Endothelial cell of umbilical vein (primary cell): ENCODE measurements at regions of chr11 and their contacts with region 1.

Region 1: GRCh38 chr11:78564490-78565467 is 9.9 kb downstream of the NARS2 start:
- DNase-seq: peak; percentile 83
- H3K4me3 ChIP-seq: no peak overlapping the region
- H3K27ac ChIP-seq: no peak overlapping the region
- H3K4me1 ChIP-seq: peaks cover 45% of the 10 kb centered on the region
- H3K27me3 ChIP-seq: no peaks in the 10 kb centered on the region
- CTCF ChIP-seq: peak; percentile 37 to 40
- POLR2A ChIP-seq: no peak

Region 2: GRCh38 chr11:77820563-77821348 is 744.0 kb before region 1 on chr11 and contains the starts of genes AAMDC and RSF1:
- CTCF ChIA-PET with region 1: interaction called, 3 read pairs
- POLR2A ChIA-PET with region 1: no interaction called
- dilution Hi-C with region 1: no loop called
- intact Hi-C with region 1: loop called (anchors 2 kb)
- DNase-seq: peak; percentile 99
- H3K4me3 ChIP-seq: peak within 1 kb of the TSS; percentile 88 to 96 (median 91)
- H3K27ac ChIP-seq: peak within 1 kb of the TSS; percentile 53
- H3K4me1 ChIP-seq: peaks cover 13% of the 10 kb centered on the region
- H3K27me3 ChIP-seq: no peaks in the 10 kb centered on the region
- CTCF ChIP-seq: peak; percentile 61 to 93
- POLR2A ChIP-seq: peak; percentile 79
- total RNA-seq, gene AAMDC: 51.0 and 57.1 TPM in 2 replicates
- total RNA-seq, gene RSF1: 55.1 and 58.6 TPM in 2 replicates

Region 3: DNA sequence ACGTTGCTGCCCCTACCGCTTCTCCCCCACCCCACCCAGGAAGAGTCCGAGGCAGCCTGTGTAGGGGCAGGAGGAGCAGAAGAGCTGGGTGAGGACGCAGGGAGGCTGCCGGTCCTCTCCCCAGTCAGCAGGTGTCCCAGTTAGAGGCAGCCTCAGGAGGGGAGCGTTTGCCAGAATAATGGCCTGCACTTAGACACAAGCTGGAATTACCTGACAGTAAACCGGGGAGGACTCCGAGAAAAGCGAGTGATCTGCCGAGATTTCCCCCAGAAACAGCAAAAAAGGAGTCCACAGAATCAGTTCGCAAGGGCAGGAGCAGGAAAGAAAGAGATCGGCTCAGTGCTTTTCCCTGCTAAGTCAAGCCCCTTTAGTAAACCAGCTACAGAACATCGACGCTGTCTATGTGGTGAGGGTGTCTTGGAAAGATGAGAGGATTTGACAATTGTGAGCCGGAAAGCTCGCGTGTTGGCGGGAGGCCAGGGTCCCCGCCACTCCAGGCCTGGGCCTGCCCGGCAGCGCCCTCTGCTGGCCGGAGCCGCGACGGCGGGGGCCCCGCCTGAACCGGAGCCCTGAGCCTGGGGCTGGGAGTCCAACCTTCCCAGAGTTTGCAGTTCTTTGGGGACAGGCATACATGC is 518.8 kb before region 1 on chr11:
- CTCF ChIA-PET with region 1: interaction called, 29 read pairs
- POLR2A ChIA-PET with region 1: no interaction called
- dilution Hi-C with region 1: no loop called
- intact Hi-C with region 1: loop called (anchors 2 kb)
- DNase-seq: peak; percentile 62
- H3K4me3 ChIP-seq: peak overlapping the region in 2 of 3 experiments; percentile 23 to 72
- H3K27ac ChIP-seq: no peak overlapping the region
- H3K4me1 ChIP-seq: peaks cover 8% of the 10 kb centered on the region
- H3K27me3 ChIP-seq: no peaks in the 10 kb centered on the region
- CTCF ChIP-seq: peak; percentile 97 to 99
- POLR2A ChIP-seq: no peak

Region 4: GRCh38 chr11:78149646-78150045 is 415.1 kb before region 1 on chr11:
- CTCF ChIA-PET with region 1: interaction called, 36 read pairs
- POLR2A ChIA-PET with region 1: no interaction called
- dilution Hi-C with region 1: no loop called
- intact Hi-C with region 1: no loop called
- DNase-seq: peak; percentile 79
- H3K4me3 ChIP-seq: no peak overlapping the region
- H3K27ac ChIP-seq: no peak overlapping the region
- H3K4me1 ChIP-seq: no peaks in the 10 kb centered on the region
- H3K27me3 ChIP-seq: no peaks in the 10 kb centered on the region
- CTCF ChIP-seq: peak in 1 of 2 donors; percentile 24
- POLR2A ChIP-seq: no peak

Region 5: GRCh38 chr11:78228467-78228866 is 336.3 kb before region 1 on chr11:
- CTCF ChIA-PET with region 1: interaction called, 254 read pairs
- POLR2A ChIA-PET with region 1: interaction called, 3 read pairs
- dilution Hi-C with region 1: no loop called
- intact Hi-C with region 1: loop called (anchors 1 kb)
- DNase-seq: peak; percentile 82
- H3K4me3 ChIP-seq: no peak overlapping the region
- H3K27ac ChIP-seq: no peak overlapping the region
- H3K4me1 ChIP-seq: peaks cover 4% of the 10 kb centered on the region
- H3K27me3 ChIP-seq: no peaks in the 10 kb centered on the region
- CTCF ChIP-seq: peak; percentile 38 to 59
- POLR2A ChIP-seq: no peak

Region 6: GRCh38 chr11:78318321-78319114 is 246.3 kb before region 1 on chr11:
- CTCF ChIA-PET with region 1: interaction called, 12 read pairs
- POLR2A ChIA-PET with region 1: no interaction called
- dilution Hi-C with region 1: no loop called
- intact Hi-C with region 1: no loop called
- DNase-seq: peak; percentile 80
- H3K4me3 ChIP-seq: no peak overlapping the region
- H3K27ac ChIP-seq: no peak overlapping the region
- H3K4me1 ChIP-seq: peaks cover 21% of the 10 kb centered on the region
- H3K27me3 ChIP-seq: no peaks in the 10 kb centered on the region
- CTCF ChIP-seq: no peak
- POLR2A ChIP-seq: peak; percentile 25

Region 7: GRCh38 chr11:78432058-78432515 is 132.7 kb before region 1 on chr11:
- CTCF ChIA-PET with region 1: interaction called, 20 read pairs
- POLR2A ChIA-PET with region 1: no interaction called
- dilution Hi-C with region 1: no loop called
- intact Hi-C with region 1: no loop called
- DNase-seq: peak; percentile 40
- H3K4me3 ChIP-seq: no peak overlapping the region
- H3K27ac ChIP-seq: no peak overlapping the region
- H3K4me1 ChIP-seq: no peaks in the 10 kb centered on the region
- H3K27me3 ChIP-seq: no peaks in the 10 kb centered on the region
- CTCF ChIP-seq: peak; percentile 40 to 67
- POLR2A ChIP-seq: no peak

Region 8: DNA sequence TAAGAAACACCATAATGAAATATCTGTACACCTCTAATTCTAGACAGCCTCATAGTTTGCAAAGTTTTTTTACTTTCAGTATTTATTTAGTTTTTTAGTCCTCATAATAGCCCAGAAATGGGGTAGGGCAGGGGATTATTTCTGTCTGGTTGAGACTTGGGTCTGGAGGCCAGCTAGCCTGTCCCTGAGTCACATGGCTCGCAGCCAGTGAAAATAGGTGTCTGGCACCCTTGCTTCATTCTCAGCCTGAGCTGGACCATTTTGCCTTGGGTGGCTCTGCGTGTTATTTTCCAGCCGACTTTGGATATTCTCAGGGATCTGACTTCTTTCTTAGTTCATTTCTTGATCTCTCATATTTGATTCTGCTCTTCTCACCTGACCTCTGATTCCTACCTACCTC is 133.8 kb after region 1 on chr11:
- CTCF ChIA-PET with region 1: no interaction called
- POLR2A ChIA-PET with region 1: no interaction called
- dilution Hi-C with region 1: no loop called
- intact Hi-C with region 1: no loop called
- DNase-seq: no peak
- H3K4me3 ChIP-seq: no peak overlapping the region
- H3K27ac ChIP-seq: no peak overlapping the region
- H3K4me1 ChIP-seq: no peaks in the 10 kb centered on the region
- H3K27me3 ChIP-seq: no peaks in the 10 kb centered on the region
- CTCF ChIP-seq: no peak
- POLR2A ChIP-seq: no peak

Region 9: GRCh38 chr11:78832226-78832947 is 267.6 kb after region 1 on chr11:
- CTCF ChIA-PET with region 1: no interaction called
- POLR2A ChIA-PET with region 1: no interaction called
- dilution Hi-C with region 1: no loop called
- intact Hi-C with region 1: no loop called
- DNase-seq: no peak
- H3K4me3 ChIP-seq: no peak overlapping the region
- H3K27ac ChIP-seq: no peak overlapping the region
- H3K4me1 ChIP-seq: no peaks in the 10 kb centered on the region
- H3K27me3 ChIP-seq: peaks cover 0 to 2% of the 10 kb centered on the region in 2 experiments
- CTCF ChIP-seq: no peak
- POLR2A ChIP-seq: no peak